Dendritic cell treated with granulocyte-macrophage colony-stimulating factor and Interleukin-4, amounts not matched to agents 40 ng/mL and 50 ng/mL, for 4 days (primary cell): ENCODE measurements at regions of chr11 and their contacts with region 1.

Region 1: DNA sequence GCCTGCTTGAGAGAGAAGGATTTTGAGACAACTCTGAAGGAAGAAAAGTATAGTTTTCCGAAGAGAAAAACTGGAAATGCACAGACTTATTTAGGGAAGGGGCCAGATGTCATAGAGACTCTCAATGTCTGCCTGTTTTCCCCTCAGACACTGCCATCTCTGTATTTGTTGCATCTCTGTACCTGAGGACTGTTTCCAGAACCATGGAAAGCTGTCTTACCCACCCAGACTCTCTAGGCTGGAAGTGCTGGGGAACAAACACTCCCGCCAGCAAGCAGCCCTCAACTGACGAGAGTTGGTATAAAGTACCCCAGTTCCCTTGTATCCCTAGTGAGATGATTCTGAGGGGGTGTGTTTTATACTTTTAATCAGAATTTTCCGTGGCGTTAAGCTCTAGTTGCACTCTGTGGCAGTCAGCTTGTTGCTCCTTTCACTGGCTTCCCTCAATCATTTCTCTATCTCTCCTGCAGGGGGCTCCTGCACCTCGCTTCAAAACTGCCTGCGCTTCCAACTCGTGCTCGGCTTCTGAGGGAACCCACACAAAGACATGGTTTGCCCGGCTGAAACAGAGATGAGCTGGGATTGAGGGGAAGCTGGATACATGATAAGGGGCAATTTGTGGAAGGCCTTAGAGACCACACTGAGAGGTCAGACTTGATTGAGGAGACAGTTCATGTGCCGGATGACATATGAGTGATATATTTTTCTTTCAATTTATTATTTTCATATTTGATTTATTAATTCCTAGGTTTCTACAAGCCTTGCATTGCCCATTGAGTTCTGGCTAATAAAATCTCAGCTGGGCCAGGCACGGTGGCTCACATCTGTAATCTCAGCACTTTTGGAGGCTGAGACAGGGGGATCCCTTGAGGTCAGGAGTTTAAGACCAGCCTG is 36.9 kb upstream of the CLPB start:
- H3K4me3 Mint-ChIP-seq: no peak overlapping the region
- H3K27ac Mint-ChIP-seq: no peak overlapping the region
- H3K4me1 Mint-ChIP-seq: peaks cover 9% of the 10 kb centered on the region
- H3K27me3 Mint-ChIP-seq: peaks cover 51% of the 10 kb centered on the region

Region 2: DNA sequence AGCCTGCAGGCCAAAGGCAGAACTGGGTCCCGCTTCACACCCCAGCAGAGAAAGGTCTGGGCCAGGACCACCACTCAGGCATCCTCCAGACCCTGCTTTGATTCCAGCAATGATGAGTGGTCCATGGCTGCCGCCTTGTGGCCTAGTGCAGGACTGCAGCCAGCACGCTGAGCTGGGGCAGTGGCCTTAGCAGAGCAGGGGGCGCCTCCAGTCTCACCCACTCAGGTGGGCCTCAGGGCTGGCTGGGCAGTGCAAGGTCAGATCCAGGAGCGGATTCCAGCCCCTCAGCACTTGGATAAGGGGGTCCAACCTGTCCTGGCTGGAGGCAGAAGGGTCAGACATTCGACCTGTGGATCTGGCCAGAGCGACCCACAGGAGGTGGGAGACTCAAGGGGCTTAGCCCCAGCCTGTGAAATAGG is 212.5 kb after region 1 on chr11:
- intact Hi-C with region 1: loop called (anchors 2 kb)
- H3K4me3 Mint-ChIP-seq: no peak overlapping the region
- H3K27ac Mint-ChIP-seq: no peak overlapping the region
- H3K4me1 Mint-ChIP-seq: peaks cover 59% of the 10 kb centered on the region
- H3K27me3 Mint-ChIP-seq: peaks cover 26% of the 10 kb centered on the region